ENCODE measurements at regions of chr9 and their contacts with region 1.

Region 1: DNA sequence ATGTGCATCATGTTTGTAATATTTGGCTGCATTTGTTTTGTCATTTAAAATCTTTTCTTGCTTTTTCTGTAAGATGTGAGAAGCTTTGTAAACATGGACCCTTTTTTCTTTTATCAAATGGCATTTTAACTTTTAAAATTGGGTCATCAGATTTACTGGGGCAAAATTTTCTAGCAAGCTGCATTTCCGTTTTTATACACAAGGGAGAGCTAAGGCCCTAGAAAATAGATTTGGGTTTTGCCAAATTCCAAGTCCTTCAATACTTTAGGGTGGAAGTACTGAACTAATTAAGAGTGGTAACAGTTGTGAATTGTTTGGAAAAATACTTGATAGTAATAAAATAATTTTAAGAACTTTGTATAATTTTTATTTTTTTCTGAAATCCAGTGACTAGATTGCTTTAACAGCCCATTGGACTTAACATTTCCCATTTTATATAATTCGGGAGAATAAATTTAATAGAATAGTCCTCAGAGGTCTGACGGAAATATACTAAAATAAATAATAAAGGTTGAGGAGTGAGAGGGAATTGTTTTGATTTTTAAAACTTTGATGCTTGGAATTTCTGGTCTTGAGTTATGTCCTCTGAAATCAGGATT is 117.4 kb downstream of the SMARCA2 start:
- DNase-seq: peak; percentile 44
- H3K4me3 ChIP-seq: no peak overlapping the region
- H3K27ac ChIP-seq: no peak overlapping the region
- H3K4me1 ChIP-seq: peaks cover 3 to 5% of the 10 kb centered on the region in 2 experiments; a peak in 1 of 4 replicates
- H3K27me3 ChIP-seq: no peaks in the 10 kb centered on the region
- CTCF ChIP-seq: peak; percentile 81
- EP300 ChIP-seq: no peak
- RAD21 ChIP-seq: peak; percentile 93

Region 2: GRCh38 chr9:1995084-1995483 is 137.5 kb before region 1 on chr9:
- CTCF ChIA-PET with region 1: no interaction called
- POLR2A ChIA-PET with region 1: no interaction called
- DNase-seq: no peak
- H3K4me3 ChIP-seq: no peak overlapping the region
- H3K27ac ChIP-seq: no peak overlapping the region
- H3K4me1 ChIP-seq: peaks cover 0 to 6% of the 10 kb centered on the region in 2 experiments; a peak in 1 of 4 replicates
- H3K27me3 ChIP-seq: no peaks in the 10 kb centered on the region
- CTCF ChIP-seq: no peak
- EP300 ChIP-seq: no peak
- RAD21 ChIP-seq: no peak

Region 3: GRCh38 chr9:2120926-2121689 is 11.5 kb before region 1 on chr9:
- CTCF ChIA-PET with region 1: interaction called, 36 read pairs
- POLR2A ChIA-PET with region 1: no interaction called
- DNase-seq: no peak
- H3K4me3 ChIP-seq: no peak overlapping the region
- H3K27ac ChIP-seq: peak overlapping the region; percentile 42 to 50; a peak in 3 of 4 replicates
- H3K4me1 ChIP-seq: peaks cover 0 to 14% of the 10 kb centered on the region in 2 experiments; a peak in 2 of 4 replicates
- H3K27me3 ChIP-seq: no peaks in the 10 kb centered on the region
- CTCF ChIP-seq: peak; percentile 47
- EP300 ChIP-seq: no peak
- RAD21 ChIP-seq: no peak

Region 4: DNA sequence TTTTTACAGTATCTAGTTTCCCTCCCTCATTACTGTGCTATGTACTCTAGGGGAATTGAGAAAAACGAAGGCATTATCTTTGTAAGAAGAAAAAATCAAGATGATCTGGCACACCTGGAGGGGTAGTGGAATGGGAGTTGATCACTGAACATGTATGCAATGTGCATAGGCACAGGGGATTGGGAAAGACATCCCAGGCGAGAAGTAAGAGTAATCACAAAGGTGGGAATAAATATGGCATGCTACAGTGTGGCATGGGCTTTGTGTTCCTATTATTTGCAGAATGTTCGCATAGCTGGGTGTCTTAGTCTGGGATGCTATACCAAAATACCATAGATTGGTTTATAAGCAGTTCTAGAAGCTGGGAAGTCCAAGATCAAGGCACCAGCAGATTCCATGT is 13.2 kb after region 1 on chr9:
- CTCF ChIA-PET with region 1: interaction called, 18 read pairs
- POLR2A ChIA-PET with region 1: no interaction called
- DNase-seq: no peak
- H3K4me3 ChIP-seq: no peak overlapping the region
- H3K27ac ChIP-seq: no peak overlapping the region
- H3K4me1 ChIP-seq: no peaks in the 10 kb centered on the region
- H3K27me3 ChIP-seq: no peaks in the 10 kb centered on the region
- CTCF ChIP-seq: no peak
- EP300 ChIP-seq: no peak
- RAD21 ChIP-seq: no peak

Region 5: GRCh38 chr9:2181792-2182191 is 49.2 kb after region 1 on chr9:
- CTCF ChIA-PET with region 1: interaction called, 14 read pairs
- POLR2A ChIA-PET with region 1: no interaction called
- DNase-seq: peak; percentile 47
- H3K4me3 ChIP-seq: no peak overlapping the region; a peak in 1 of 4 replicates
- H3K27ac ChIP-seq: no peak overlapping the region
- H3K4me1 ChIP-seq: no peaks in the 10 kb centered on the region; a peak in 2 of 4 replicates
- H3K27me3 ChIP-seq: no peaks in the 10 kb centered on the region
- CTCF ChIP-seq: peak; percentile 61
- EP300 ChIP-seq: no peak
- RAD21 ChIP-seq: peak; percentile 60

Region 6: GRCh38 chr9:2321523-2322151 is 189.1 kb after region 1 on chr9:
- CTCF ChIA-PET with region 1: no interaction called
- POLR2A ChIA-PET with region 1: no interaction called
- DNase-seq: no peak
- H3K4me3 ChIP-seq: no peak overlapping the region
- H3K27ac ChIP-seq: no peak overlapping the region
- H3K4me1 ChIP-seq: no peaks in the 10 kb centered on the region
- H3K27me3 ChIP-seq: no peaks in the 10 kb centered on the region
- CTCF ChIP-seq: peak; percentile 21
- EP300 ChIP-seq: no peak
- RAD21 ChIP-seq: no peak; the same call in 1 of the 2 replicates

Region 7: GRCh38 chr9:2727966-2728613 is 595.5 kb after region 1 on chr9:
- CTCF ChIA-PET with region 1: interaction called, 31 read pairs
- POLR2A ChIA-PET with region 1: no interaction called
- DNase-seq: peak; percentile 40
- H3K4me3 ChIP-seq: no peak overlapping the region
- H3K27ac ChIP-seq: no peak overlapping the region
- H3K4me1 ChIP-seq: peaks cover 7 to 12% of the 10 kb centered on the region in 2 experiments; a peak in 2 of 4 replicates
- H3K27me3 ChIP-seq: no peaks in the 10 kb centered on the region
- CTCF ChIP-seq: peak; percentile 65
- EP300 ChIP-seq: no peak
- RAD21 ChIP-seq: peak; percentile 88

Region 8: DNA sequence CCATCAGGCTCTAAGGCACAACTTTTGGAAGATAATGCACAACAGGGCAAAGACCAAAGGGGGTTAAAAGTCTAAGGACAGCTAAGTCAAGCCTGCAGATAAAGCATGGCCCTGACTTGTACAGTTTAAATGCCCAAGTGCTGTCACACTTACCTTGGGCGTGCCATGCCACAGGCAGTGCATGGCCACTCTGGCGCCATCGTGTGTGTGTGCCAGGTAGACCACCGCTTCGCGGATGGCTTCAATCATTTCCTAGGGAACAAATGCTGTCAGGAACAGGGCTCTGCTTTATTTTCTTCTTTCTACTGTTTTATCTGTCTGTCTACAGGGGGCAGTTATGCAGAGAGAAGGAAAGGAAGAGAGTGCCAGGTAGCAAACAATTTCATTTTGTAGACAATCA is 692.0 kb after region 1 on chr9:
- CTCF ChIA-PET with region 1: interaction called, 10 read pairs
- POLR2A ChIA-PET with region 1: no interaction called
- DNase-seq: peak; percentile 24
- H3K4me3 ChIP-seq: no peak overlapping the region; a peak in 1 of 4 replicates
- H3K27ac ChIP-seq: no peak overlapping the region
- H3K4me1 ChIP-seq: no peaks in the 10 kb centered on the region
- H3K27me3 ChIP-seq: no peaks in the 10 kb centered on the region
- CTCF ChIP-seq: peak; percentile 26; the same call in 1 of the 2 replicates
- EP300 ChIP-seq: no peak
- RAD21 ChIP-seq: peak; percentile 50

Region 9: DNA sequence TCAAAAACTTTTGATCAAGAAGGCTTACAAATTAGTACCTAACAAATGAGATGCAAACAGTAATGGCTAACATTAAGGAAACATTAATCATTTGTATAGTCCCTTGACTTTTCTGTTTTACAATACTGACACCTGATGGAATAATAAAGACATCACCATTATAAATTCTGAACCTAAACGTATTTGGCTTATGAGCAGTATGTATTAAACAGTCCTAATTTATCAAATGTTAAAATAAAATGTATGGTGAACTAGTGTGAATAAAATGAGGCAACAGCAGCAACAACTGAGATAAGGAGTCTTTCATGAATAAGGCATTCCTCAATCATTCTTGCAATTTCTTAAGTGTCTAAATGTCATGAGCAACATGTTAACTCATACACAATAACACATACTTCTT is 705.3 kb after region 1 on chr9:
- CTCF ChIA-PET with region 1: interaction called, 19 read pairs
- POLR2A ChIA-PET with region 1: no interaction called
- DNase-seq: peak; percentile 12
- H3K4me3 ChIP-seq: no peak overlapping the region
- H3K27ac ChIP-seq: no peak overlapping the region
- H3K4me1 ChIP-seq: peaks cover 13 to 23% of the 10 kb centered on the region in 2 experiments; a peak in 3 of 4 replicates
- H3K27me3 ChIP-seq: no peaks in the 10 kb centered on the region
- CTCF ChIP-seq: peak; percentile 58
- EP300 ChIP-seq: no peak
- RAD21 ChIP-seq: peak; percentile 58